ENCODE measurements at regions of chr9 and their contacts with region 1.

Region 1: DNA sequence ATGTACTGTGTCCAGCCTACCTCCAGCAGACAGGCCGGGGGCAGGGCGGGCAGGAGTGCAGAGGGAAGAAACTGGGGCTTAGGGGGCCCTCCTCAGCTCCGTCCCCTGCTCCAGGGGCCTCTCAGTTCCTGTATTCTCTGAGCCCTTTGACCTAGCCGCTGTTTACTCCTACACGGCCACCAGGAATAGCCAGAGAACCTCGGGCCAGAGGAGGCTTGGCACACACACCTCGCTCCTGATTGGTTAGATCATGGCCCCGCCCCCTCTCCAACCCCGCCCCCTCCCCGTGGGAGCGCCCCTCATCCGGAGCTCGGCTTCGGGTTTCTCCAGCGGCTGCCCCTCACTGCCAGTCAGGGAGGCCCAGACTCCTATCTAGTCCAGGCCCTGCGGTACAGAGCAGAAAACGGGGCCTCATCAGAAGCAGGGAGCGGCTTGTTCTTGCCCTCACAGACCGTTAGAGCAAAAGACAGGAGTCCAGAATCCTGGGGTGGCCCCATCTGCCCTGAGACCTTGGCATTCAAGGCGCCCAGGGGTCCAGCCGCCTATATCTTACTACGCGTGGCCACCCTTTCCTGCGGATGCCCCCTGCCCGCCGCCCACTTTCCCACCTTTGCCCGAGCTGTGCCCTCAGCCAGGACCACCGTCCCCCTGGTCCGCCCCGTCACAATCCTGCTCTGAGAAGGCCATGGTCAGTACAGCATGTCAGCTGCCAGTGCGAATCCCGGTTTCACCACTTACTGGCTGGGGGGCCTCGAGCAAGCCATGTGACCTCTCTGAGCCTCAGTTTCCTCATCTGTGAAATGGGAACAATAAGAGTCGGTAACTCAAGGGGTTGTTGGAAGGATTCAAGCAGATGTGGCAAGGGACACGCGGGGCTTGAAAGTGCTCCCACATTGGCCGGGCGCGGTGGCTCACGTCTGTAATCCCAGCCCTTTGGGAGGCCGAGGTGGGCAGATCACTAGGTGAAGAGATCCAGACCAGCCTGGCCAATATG is 1.9 kb downstream of the ST6GALNAC6 start:
- DNase-seq: no peak
- H3K4me3 ChIP-seq: peak overlapping the region in 1 of 2 donors; percentile 2
- H3K27ac ChIP-seq: peak overlapping the region; percentile 80 to 82
- H3K4me1 ChIP-seq: no peaks in the 10 kb centered on the region
- H3K27me3 ChIP-seq: no peaks in the 10 kb centered on the region
- CTCF ChIP-seq: no peak
- POLR2A ChIP-seq: no peak

Region 2: DNA sequence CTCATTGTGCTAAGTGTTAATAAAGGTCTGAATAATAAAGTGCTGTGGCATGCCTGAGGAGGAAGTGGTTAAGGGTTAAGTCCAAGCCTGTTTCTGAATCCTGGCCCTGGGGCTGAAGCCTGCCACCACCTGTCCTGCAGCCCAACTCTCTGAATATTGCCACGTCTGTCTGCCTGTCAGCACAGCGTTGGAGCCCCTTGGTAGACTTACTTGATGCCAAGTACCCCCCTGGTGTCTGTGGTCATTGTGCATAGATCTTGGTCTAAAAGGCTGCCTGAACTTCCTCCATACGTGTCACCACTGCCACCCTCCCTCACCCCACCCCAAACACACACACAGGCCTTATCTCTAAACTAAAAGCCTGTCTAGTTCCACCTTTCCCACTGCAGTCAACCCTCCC is 536.0 kb before region 1 on chr9:
- intact Hi-C with region 1: no loop called
- DNase-seq: no peak
- H3K4me3 ChIP-seq: no peak overlapping the region
- H3K27ac ChIP-seq: no peak overlapping the region
- H3K4me1 ChIP-seq: no peaks in the 10 kb centered on the region
- H3K27me3 ChIP-seq: no peaks in the 10 kb centered on the region
- CTCF ChIP-seq: no peak
- POLR2A ChIP-seq: no peak

Region 3: GRCh38 chr9:127877566-127877998 is 19.9 kb before region 1 on chr9 and contains the start of gene AK1:
- intact Hi-C with region 1: loop called (anchors 1 kb)
- DNase-seq: peak; percentile 75
- H3K4me3 ChIP-seq: peak within 1 kb of the TSS; percentile 45 to 52
- H3K27ac ChIP-seq: peak within 1 kb of the TSS in 1 of 2 donors; percentile 51
- H3K4me1 ChIP-seq: peaks cover 8% of the 10 kb centered on the region
- H3K27me3 ChIP-seq: no peaks in the 10 kb centered on the region
- CTCF ChIP-seq: no peak
- POLR2A ChIP-seq: peak; percentile 59
- total RNA-seq, gene AK1: 22.2 to 123 TPM

Region 4: GRCh38 chr9:128304149-128304974 is 406.8 kb after region 1 on chr9:
- intact Hi-C with region 1: no loop called
- DNase-seq: no peak
- H3K4me3 ChIP-seq: no peak overlapping the region
- H3K27ac ChIP-seq: no peak overlapping the region
- H3K4me1 ChIP-seq: no peaks in the 10 kb centered on the region
- H3K27me3 ChIP-seq: no peaks in the 10 kb centered on the region
- CTCF ChIP-seq: no peak
- POLR2A ChIP-seq: no peak

Measured in prostate gland (tissue), 2 donors.